ENCODE measurements at regions of chr15 and their contacts with region 1.

Region 1: GRCh38 chr15:58933281-58934113 is at the start of gene SLTM:
- DNase-seq: peak; percentile 88 to 98
- ATAC-seq: peak; percentile 88 to 97 (median 91)
- H3K4me3 ChIP-seq: peak within 1 kb of the TSS; percentile 98
- H3K4me3 Mint-ChIP-seq: peak within 1 kb of the TSS; percentile 97
- H3K27ac ChIP-seq: peak within 1 kb of the TSS; percentile 100
- H3K27ac Mint-ChIP-seq: peak within 1 kb of the TSS; percentile 96 to 97
- H3K4me1 ChIP-seq: peaks cover 8% of the 10 kb centered on the region
- H3K4me1 Mint-ChIP-seq: peaks cover 26 to 27% of the 10 kb centered on the region in 2 donors
- H3K27me3 ChIP-seq: no peaks in the 10 kb centered on the region
- H3K27me3 Mint-ChIP-seq: peaks cover 0 to 3% of the 10 kb centered on the region in 2 donors
- CTCF ChIP-seq: peak; percentile 46
- total RNA-seq, gene SLTM: 206 to 226 (median 223) TPM

Region 2: DNA sequence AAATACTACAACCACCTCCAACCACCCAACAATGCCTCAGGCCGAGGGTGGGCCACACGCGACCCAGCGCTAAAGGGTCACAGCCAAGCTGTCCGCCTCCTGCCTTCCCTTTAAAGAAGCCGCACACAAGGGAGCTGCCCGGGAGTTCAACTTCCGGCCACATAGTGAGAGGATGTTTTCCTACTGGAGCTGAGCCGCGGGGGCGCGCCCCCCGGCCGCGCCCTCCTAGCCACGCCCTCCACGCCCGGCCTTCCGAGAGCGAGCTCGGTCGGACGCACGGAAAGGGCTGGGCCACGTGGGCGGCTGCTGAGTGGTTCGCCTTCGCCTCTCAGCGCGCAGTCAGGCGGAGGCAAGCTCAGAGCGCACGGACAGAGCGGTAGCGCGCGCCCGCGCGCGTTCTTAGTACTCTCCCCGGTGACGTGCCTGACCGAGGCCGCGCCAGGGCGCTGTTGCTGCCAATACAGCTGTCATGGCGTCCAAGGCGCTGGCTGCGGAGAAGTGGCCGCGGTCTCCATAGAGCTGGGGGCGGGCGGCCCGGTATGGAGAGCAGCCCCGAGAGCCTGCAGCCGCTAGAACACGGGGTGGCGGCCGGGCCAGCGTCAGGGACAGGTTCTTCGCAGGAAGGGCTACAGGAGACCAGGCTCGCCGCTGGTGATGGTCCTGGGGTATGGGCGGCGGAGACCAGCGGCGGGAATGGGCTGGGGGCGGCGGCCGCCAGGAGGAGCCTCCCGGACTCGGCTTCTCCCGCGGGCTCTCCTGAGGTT is 162.5 kb before region 1 on chr15 and contains the start of gene MINDY2:
- intact Hi-C with region 1: loop called (anchors 1 kb)
- DNase-seq: peak; percentile 89 to 97
- ATAC-seq: peak; percentile 92 to 99 (median 94)
- H3K4me3 ChIP-seq: peak within 1 kb of the TSS; percentile 99
- H3K4me3 Mint-ChIP-seq: no peak within 1 kb of the TSS
- H3K27ac ChIP-seq: peak within 1 kb of the TSS; percentile 92
- H3K27ac Mint-ChIP-seq: peak within 1 kb of the TSS; percentile 87 to 96
- H3K4me1 ChIP-seq: peaks cover 16% of the 10 kb centered on the region
- H3K4me1 Mint-ChIP-seq: peaks cover 10 to 14% of the 10 kb centered on the region in 2 donors
- H3K27me3 ChIP-seq: no peaks in the 10 kb centered on the region
- H3K27me3 Mint-ChIP-seq: no peaks in the 10 kb centered on the region
- CTCF ChIP-seq: no peak
- total RNA-seq, gene MINDY2: 16.3 to 18.7 (median 18.3) TPM

Measured in natural killer cell (primary cell).